ENCODE measurements at regions of chr17 and their contacts with region 1.

Region 1: GRCh38 chr17:74807925-74808324 is 31.8 kb upstream of the NAT9 start:
- DNase-seq: no peak
- ATAC-seq: no peak
- H3K4me3 ChIP-seq: no peak overlapping the region
- H3K4me3 Mint-ChIP-seq: no peak overlapping the region
- H3K27ac ChIP-seq: no peak overlapping the region
- H3K27ac Mint-ChIP-seq: no peak overlapping the region
- H3K4me1 ChIP-seq: no peaks in the 10 kb centered on the region
- H3K4me1 Mint-ChIP-seq: no peaks in the 10 kb centered on the region
- H3K27me3 ChIP-seq: no peaks in the 10 kb centered on the region
- H3K27me3 Mint-ChIP-seq: no peaks in the 10 kb centered on the region
- CTCF ChIP-seq: no peak

Region 2: DNA sequence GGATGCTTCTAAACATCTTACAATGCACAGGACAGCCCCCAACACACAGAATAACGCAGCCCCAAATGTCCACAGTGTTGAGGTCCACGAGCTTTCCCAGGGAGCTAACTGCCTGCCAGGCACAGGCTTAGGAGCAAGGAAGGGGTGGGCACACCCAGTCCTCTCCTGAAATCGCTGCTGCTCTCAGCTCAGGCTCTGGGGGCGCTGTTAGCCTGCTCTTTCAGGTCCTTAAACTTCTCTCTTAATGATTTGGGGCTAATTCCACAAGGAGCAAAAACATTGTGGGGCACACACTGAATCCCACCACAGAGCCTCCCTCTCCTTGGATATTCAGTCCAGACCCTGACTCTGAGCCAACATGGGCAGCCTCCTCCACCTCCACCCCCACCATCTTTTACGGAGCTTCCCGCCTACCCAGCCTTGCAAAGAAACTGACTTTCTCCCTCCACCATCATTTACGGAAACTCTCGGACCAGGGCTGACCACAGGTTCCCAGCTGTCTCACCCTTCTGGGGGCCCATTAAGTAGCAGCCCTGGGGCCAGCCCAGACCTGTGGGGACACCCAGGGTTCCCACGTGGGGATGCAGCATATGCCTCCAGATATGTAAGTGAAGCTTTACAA is 241.7 kb before region 1 on chr17:
- CTCF ChIA-PET with region 1: no interaction called
- POLR2A ChIA-PET with region 1: no interaction called
- intact Hi-C with region 1: loop called in 1 of 2 experiments (anchors 2 kb)
- DNase-seq: peak in 8 of 14 experiments; percentile 3 to 56 (median 22)
- ATAC-seq: peak; percentile 39
- H3K4me3 ChIP-seq: no peak overlapping the region
- H3K4me3 Mint-ChIP-seq: no peak overlapping the region
- H3K27ac ChIP-seq: no peak overlapping the region
- H3K27ac Mint-ChIP-seq: no peak overlapping the region
- H3K4me1 ChIP-seq: peaks cover 11% of the 10 kb centered on the region
- H3K4me1 Mint-ChIP-seq: peaks cover 8% of the 10 kb centered on the region
- H3K27me3 ChIP-seq: peaks cover 8 to 14% of the 10 kb centered on the region in 2 experiments
- H3K27me3 Mint-ChIP-seq: peaks cover 33% of the 10 kb centered on the region
- CTCF ChIP-seq: peak; percentile 60